Esophagus squamous epithelium (tissue), 5 donors: ENCODE measurements at regions of chr11 and their contacts with region 1.

Region 1: DNA sequence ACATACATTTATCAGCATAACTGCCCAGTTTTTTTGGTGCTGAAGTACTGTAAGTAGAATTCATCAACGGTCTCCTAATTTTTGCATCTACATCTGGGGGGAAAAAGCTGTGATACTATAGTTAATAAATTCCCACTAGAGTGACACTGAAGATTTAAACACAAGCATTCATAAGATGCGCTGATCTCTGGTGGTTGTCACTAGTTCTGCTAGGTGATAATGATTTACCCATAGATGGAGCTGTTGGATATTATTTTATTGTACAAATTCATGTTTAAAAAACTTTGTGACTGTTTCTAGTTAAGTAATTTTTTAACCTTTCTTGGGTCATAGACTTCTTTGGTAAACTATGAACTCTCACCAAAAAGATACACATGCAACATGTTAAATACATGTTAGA is 106.6 kb downstream of the EMSY start:
- DNase-seq: no peak
- H3K4me3 ChIP-seq: no peak overlapping the region
- H3K27ac ChIP-seq: no peak overlapping the region
- H3K4me1 ChIP-seq: peaks cover 0 to 4% (median 0%) of the 10 kb centered on the region in 3 donors
- H3K27me3 ChIP-seq: no peaks in the 10 kb centered on the region
- CTCF ChIP-seq: peak in 1 of 6 experiments; percentile 42
- POLR2A ChIP-seq: no peak

Region 2: DNA sequence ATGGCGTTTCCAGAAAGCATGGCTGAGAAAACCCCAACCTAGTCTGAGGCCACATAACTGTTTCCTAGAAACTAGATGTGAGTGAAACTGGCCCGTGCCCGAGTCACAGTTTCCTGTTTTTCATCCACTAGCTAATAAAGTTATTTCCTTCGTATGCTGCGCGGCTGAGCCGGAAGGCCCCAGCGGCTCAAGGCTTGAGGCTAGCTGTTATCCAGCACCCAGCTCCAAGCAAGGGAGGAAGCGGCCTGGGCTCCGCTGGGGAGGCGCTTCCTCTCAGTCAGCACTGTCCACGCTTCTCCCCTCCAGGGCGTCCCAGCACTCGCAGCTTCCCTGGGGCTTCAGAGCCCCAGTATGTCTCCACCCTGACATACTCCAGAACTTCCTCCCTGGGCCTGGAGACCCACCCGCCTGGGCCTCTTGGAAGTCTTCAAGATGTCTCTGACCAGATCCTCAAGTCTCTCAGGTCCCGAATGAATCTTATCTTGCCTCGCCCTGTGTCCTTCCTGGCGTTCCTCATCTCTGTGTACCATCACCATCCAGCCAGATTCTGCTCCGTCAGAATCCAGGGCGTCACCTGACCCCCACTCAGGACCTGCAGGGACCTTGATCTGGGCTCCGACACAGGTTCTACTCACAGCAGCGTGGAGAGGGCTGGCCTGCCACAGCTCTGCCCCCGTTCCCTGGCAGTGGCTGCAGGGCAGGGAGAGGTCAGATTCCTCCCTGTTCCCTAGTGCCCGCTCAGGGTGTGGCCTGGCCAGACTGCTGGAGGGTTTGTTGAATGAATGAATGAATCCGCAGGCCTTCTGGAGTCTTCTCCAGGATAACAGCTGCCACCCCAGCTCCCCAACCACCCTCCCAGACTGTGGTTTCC is 37.3 kb after region 1 on chr11:
- intact Hi-C with region 1: no loop called
- DNase-seq: no peak
- H3K4me3 ChIP-seq: no peak overlapping the region
- H3K27ac ChIP-seq: peak overlapping the region; percentile 45 to 81 (median 64)
- H3K4me1 ChIP-seq: peaks cover 0 to 13% (median 13%) of the 10 kb centered on the region in 3 donors
- H3K27me3 ChIP-seq: no peaks in the 10 kb centered on the region
- CTCF ChIP-seq: no peak
- POLR2A ChIP-seq: no peak

Region 3: GRCh38 chr11:76670485-76671236 is 119.3 kb after region 1 on chr11 and contains the start of gene LRRC32:
- intact Hi-C with region 1: loop called (anchors 10 kb)
- DNase-seq: no peak
- H3K4me3 ChIP-seq: peak within 1 kb of the TSS; percentile 33 to 77 (median 52)
- H3K27ac ChIP-seq: peak within 1 kb of the TSS; percentile 41 to 89 (median 74)
- H3K4me1 ChIP-seq: peaks cover 12 to 60% (median 32%) of the 10 kb centered on the region in 3 donors
- H3K27me3 ChIP-seq: peaks cover 0 to 43% (median 0%) of the 10 kb centered on the region in 4 donors
- CTCF ChIP-seq: peak in 1 of 6 experiments; percentile 14
- POLR2A ChIP-seq: peak in 1 of 4 donors; percentile 30
- total RNA-seq, gene LRRC32: 3.0 to 23.4 (median 8.5) TPM